ENCODE measurements at regions of chr2 and their contacts with region 1.

Region 1: GRCh38 chr2:112818094-112818902 is 18.3 kb downstream of the IL1B start:
- DNase-seq: peak; percentile 96
- ATAC-seq: peak; percentile 88
- H3K4me3 ChIP-seq: 0 out of 6 replicates have a peak overlapping the region, but pooled peaks of 1 of the 3 experiments have one; percentile 39
- H3K27ac ChIP-seq: peak overlapping the region; percentile 91
- H3K4me1 ChIP-seq: peaks cover 79% of the 10 kb centered on the region
- H3K27me3 ChIP-seq: no peaks in the 10 kb centered on the region
- CTCF ChIP-seq: no peak
- EP300 ChIP-seq: peak in 1 of 2 experiments; percentile 100; a peak in 3 of 4 replicates
- POLR2A ChIP-seq: peak; percentile 21 to 46; a peak in 2 of 4 replicates
- RAD21 ChIP-seq: no peak

Region 2: DNA sequence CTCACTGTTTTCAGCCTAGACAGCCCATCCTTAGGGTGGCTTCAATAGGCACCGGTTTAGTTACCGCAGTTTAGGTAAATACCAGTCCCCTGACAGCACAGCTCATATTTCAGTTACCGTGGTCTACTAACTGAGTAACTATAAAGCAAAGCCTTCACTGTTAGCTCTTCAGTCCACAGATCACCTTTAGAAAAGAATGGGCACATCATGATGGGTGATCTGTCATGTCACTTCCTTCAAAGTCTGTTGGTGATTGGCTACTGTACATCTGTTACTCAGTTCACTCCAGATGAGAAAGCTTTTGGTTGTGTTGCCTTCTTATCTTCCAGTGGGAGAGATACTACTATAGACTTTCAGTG is 151.6 kb before region 1 on chr2:
- CTCF ChIA-PET with region 1: no interaction called
- POLR2A ChIA-PET with region 1: no interaction called
- in situ Hi-C with region 1: no loop called
- intact Hi-C with region 1: no loop called
- DNase-seq: peak; percentile 74
- ATAC-seq: peak; percentile 69
- H3K4me3 ChIP-seq: no peak overlapping the region
- H3K27ac ChIP-seq: no peak overlapping the region
- H3K4me1 ChIP-seq: peaks cover 30% of the 10 kb centered on the region
- H3K27me3 ChIP-seq: no peaks in the 10 kb centered on the region
- CTCF ChIP-seq: no peak
- EP300 ChIP-seq: no peak
- POLR2A ChIP-seq: no peak
- RAD21 ChIP-seq: no peak

Region 3: GRCh38 chr2:112777036-112777435 is 41.3 kb before region 1 on chr2:
- CTCF ChIA-PET with region 1: no interaction called
- POLR2A ChIA-PET with region 1: no interaction called
- in situ Hi-C with region 1: no loop called
- intact Hi-C with region 1: no loop called
- DNase-seq: no peak
- ATAC-seq: no peak
- H3K4me3 ChIP-seq: no peak overlapping the region
- H3K27ac ChIP-seq: no peak overlapping the region
- H3K4me1 ChIP-seq: no peaks in the 10 kb centered on the region
- H3K27me3 ChIP-seq: no peaks in the 10 kb centered on the region
- CTCF ChIP-seq: no peak
- EP300 ChIP-seq: no peak
- POLR2A ChIP-seq: no peak
- RAD21 ChIP-seq: no peak

Region 4: DNA sequence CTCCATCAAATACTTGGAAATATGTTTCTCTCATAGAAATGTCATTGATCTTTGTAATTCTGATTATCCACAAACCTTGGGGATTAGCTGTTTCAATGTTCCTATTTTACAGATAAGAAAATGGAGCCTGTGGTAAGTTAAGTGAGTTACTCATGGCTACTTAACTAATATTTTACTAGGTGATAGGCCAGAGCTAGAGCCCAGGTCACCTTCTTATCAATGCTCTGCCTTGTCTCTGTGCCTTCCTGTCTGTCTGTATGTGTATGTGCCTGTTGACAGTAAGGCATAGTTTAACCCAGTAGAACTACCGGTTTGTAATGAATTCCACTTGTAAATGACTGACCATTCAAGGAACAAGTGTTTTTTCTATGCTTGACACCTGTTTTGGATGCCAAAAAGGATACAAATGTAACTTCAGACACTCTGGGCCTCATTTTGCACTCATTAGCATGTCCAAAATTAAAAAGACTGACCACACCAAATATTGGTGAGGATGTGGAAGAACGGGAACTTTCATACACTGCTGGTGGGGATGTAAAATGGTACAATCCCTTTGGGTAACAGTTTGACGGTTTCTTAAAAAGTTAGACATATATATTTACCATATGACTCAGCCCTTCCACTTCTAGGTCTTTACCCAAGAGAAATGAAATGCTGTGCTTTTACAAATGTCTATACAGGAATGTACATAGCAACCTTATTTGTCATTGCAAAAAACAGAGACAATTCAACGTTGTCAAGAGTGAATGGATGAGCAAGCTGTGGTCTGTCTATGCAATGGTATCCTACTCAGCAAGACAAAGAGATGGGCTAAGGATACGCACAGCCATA is 14.4 kb before region 1 on chr2:
- CTCF ChIA-PET with region 1: no interaction called
- POLR2A ChIA-PET with region 1: interaction called, 10 read pairs
- in situ Hi-C with region 1: no loop called
- intact Hi-C with region 1: loop called (anchors 1 kb)
- DNase-seq: peak; percentile 92
- ATAC-seq: peak; percentile 92
- H3K4me3 ChIP-seq: peak overlapping the region in 1 of 3 experiments; percentile 6; a peak in 1 of 6 replicates
- H3K27ac ChIP-seq: peak overlapping the region; percentile 86
- H3K4me1 ChIP-seq: peaks cover 58% of the 10 kb centered on the region
- H3K27me3 ChIP-seq: no peaks in the 10 kb centered on the region
- CTCF ChIP-seq: no peak
- EP300 ChIP-seq: peak; percentile 90 to 96
- POLR2A ChIP-seq: no peak
- RAD21 ChIP-seq: no peak